ENCODE measurements at regions of chr19 and their contacts with region 1.

Region 1: GRCh38 chr19:23872282-23872919 is 42.3 kb upstream of the ZNF726 start:
- DNase-seq: no peak
- H3K4me3 ChIP-seq: no peak overlapping the region
- H3K27ac ChIP-seq: no peak overlapping the region
- H3K4me1 ChIP-seq: no peaks in the 10 kb centered on the region
- H3K27me3 ChIP-seq: no peaks in the 10 kb centered on the region
- CTCF ChIP-seq: no peak
- POLR2A ChIP-seq: no peak

Region 2: DNA sequence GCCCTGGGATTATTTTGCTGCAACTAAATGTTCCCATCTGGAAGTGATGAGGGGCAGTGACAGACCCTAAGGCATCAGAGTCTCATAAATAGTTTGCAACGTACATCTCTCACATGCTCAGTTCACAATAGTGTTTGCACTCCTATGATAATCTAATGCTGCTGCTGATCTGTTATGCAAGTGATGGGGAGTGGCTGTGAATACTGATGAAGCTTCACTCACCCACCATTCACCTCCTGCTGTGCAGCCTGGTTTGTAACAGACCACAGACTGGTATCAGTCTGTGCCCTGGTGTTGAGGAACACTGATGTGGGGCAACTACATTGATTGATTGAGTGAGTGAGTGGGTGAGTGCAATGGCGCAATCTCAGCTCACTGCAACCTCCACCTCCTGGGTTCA is 97.2 kb after region 1 on chr19:
- intact Hi-C with region 1: loop called (anchors 5 kb)
- DNase-seq: no peak
- H3K4me3 ChIP-seq: no peak overlapping the region
- H3K27ac ChIP-seq: no peak overlapping the region
- H3K4me1 ChIP-seq: no peaks in the 10 kb centered on the region
- H3K27me3 ChIP-seq: peaks cover 7% of the 10 kb centered on the region
- CTCF ChIP-seq: no peak
- POLR2A ChIP-seq: no peak